ENCODE measurements at regions of chr9 and their contacts with region 1.

Region 1: DNA sequence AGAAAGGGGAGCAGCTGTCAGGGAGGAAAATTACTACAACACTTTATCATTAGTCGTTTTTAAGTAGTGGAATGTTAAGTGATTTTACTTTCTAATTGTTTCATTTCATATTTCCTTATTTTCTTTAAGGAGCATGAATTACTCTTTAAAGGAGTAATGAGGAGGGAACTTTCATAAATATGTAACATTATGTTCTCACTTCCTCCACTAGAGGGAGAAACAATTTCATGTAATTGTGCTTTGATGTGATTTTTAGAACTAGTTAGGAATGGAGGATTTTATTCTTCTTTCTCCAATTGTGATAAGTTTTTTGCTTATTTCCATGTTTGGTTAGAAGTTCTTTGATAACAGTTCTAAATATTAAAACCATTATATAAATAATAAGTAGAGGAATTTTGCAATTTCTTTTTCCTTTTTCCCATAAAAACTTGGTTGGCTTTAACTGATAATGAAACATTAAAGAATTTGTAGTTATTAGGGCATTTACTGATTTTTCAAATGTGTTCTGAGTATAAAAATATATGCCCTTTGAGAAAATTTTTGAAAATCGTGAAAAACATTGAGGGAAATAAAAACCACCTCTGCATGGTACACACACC is 25.6 kb downstream of the CEP78 start:
- DNase-seq: peak in 1 of 2 donors; percentile 55
- ATAC-seq: peak in 2 of 3 donors; percentile 53 to 62
- H3K4me3 ChIP-seq: no peak overlapping the region
- H3K4me3 Mint-ChIP-seq: no peak overlapping the region
- H3K27ac ChIP-seq: no peak overlapping the region
- H3K27ac Mint-ChIP-seq: peak overlapping the region in 1 of 2 donors; percentile 56
- H3K4me1 ChIP-seq: no peaks in the 10 kb centered on the region
- H3K4me1 Mint-ChIP-seq: peaks cover 5 to 16% of the 10 kb centered on the region in 2 donors
- H3K27me3 ChIP-seq: no peaks in the 10 kb centered on the region
- H3K27me3 Mint-ChIP-seq: no peaks in the 10 kb centered on the region
- CTCF ChIP-seq: peak; percentile 79

Region 2: GRCh38 chr9:78369639-78370219 is 108.2 kb after region 1 on chr9:
- intact Hi-C with region 1: loop called (anchors 2 kb)
- DNase-seq: peak; percentile 27 to 72
- ATAC-seq: peak; percentile 38 to 62 (median 59)
- H3K4me3 ChIP-seq: no peak overlapping the region
- H3K4me3 Mint-ChIP-seq: no peak overlapping the region
- H3K27ac ChIP-seq: no peak overlapping the region
- H3K27ac Mint-ChIP-seq: no peak overlapping the region
- H3K4me1 ChIP-seq: no peaks in the 10 kb centered on the region
- H3K4me1 Mint-ChIP-seq: peaks cover 0 to 5% of the 10 kb centered on the region in 2 donors
- H3K27me3 ChIP-seq: peaks cover 2% of the 10 kb centered on the region
- H3K27me3 Mint-ChIP-seq: peaks cover 14 to 45% of the 10 kb centered on the region in 2 donors
- CTCF ChIP-seq: peak; percentile 76

Measured in natural killer cell (primary cell).